AG04450 (cell line): ENCODE measurements at regions of chr11 and their contacts with region 1.

Region 1: DNA sequence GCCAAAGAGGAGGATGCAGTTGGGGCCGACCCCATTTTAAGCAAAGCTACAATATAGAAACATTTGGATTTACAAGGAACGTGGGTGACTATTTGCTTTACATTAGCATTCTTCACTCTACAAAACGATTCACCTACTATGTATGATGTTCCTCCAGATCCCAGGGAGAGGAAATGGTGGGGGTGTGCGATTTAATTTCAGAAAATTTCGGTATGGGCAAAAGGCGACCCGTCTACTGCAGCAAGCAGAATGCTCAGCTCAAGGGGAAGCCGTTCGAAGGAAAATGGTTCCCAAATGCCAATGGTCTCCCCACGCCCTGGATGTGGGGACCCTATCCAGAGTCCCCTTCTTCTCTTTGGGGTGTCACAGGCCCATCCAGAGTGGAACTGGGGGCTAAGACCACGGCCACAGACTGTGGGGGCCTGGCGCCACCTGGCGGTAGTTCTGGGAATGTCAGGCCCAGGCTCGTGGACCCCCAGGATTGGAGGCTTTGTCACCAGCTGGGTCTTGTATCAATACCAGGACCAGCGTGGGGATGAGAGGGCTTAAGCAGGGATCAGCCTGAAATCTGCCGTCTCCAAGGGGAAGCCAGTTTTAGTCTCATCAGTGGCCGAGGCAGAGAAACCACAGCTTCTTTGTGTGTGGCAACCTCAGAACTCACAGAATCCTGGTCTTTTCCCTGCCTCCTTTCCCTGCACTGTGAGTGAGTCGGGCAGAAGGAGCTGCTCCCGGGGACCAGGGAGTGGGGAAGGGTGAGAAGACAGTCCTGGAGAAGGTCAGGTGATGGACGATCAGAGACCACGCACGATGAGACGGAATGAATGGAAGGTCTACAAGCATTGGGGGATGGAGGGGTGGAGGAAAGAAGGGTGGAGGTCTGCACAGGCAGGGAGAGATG is 8.4 kb downstream of the LRRC10B start:
- DNase-seq: no peak
- H3K4me3 ChIP-seq: no peak overlapping the region
- H3K27ac ChIP-seq: no peak overlapping the region
- H3K27me3 ChIP-seq: peaks cover 15% of the 10 kb centered on the region
- CTCF ChIP-seq: peak; percentile 97

Region 2: DNA sequence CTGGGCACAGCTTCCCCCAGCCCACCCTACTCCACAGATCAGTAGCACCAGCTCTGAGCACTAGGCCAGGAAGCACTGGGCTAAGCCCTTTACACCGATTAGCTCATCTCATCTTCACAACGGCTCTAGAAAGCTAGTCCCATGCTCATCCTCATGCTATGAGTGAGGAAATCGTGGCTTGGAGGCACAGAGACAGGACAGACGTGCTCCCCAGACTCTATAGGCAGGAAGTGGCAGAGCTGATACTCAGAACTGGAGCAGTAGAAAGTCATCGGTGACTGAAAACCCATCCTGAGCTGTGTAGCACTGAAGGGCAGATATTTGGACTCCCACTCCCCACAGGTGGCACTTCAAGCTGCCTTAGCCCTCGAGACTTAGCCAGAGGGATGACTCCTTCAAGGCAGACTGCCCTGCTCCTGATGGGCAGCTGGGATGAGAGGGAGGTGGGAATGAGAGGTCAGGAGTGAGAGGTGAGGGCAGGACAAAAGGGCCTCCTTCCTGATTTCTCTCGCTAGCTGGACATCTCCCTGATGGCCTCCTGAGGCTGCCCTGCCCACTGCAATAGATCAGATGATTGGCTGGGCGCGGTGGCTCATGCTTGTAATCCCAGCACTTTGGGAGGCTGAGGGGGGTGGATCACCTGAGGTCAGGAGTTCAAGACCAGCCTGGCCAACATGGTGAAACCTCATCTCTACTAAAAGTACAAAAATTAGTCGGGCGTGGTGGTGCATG is 405.0 kb before region 1 on chr11:
- CTCF ChIA-PET with region 1: no interaction called
- POLR2A ChIA-PET with region 1: no interaction called
- DNase-seq: no peak
- H3K4me3 ChIP-seq: no peak overlapping the region
- H3K27ac ChIP-seq: no peak overlapping the region
- H3K27me3 ChIP-seq: peaks cover 19% of the 10 kb centered on the region
- CTCF ChIP-seq: no peak

Region 3: DNA sequence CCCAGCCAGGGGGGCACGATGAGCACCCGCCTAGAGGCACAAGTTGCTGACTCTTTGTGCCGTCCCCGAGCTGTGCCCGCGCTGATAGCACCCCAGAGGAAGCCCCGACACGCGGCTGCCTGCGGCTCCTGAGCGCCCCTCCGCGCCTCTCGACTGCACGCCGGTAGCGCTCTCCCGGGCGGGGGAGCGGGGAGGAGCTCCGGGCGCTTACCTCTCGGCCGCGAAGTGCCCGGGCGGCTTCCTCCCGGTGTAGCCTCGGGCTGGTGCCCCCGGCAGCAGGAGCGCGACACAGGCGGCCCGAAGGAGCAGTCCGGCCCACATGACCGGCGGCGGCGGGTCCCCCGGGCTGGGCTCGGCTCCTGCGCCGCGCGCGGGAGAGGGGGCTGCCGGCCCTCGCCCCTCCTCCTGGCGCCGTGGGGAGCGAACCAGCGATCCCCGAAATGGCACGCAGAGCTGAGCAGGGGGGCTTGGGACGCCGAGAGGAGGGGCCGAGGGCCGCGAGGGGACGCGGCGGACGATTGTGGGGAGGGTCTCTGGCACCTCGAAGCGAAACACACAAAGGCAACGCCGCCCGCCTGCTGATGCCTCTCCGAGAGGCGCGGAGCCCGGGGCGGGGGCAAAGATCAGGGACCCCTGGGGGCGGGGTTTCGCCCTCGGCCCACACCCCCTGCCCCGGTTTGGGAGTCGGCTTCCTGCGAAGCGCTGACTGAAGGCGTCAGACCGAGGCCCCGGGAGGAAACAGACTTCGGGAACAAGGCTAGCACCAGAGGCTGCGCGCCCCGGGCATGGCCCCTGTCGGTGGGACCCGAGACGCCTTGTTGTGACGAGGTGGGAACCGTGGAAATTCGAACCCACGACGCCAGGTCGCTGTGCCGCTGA is 222.0 kb before region 1 on chr11 and contains the start of gene VWCE:
- CTCF ChIA-PET with region 1: no interaction called
- POLR2A ChIA-PET with region 1: no interaction called
- DNase-seq: no peak
- H3K4me3 ChIP-seq: peak within 1 kb of the TSS; percentile 65
- H3K27ac ChIP-seq: no peak within 1 kb of the TSS
- H3K27me3 ChIP-seq: no peaks in the 10 kb centered on the region
- CTCF ChIP-seq: peak; percentile 42
- polyA plus RNA-seq, gene VWCE: 1.4 and 1.7 TPM in 2 replicates

Region 4: GRCh38 chr11:61446211-61446651 is 70.7 kb before region 1 on chr11:
- CTCF ChIA-PET with region 1: interaction called, 128 read pairs
- POLR2A ChIA-PET with region 1: interaction called, 3 read pairs
- DNase-seq: peak; percentile 95
- H3K4me3 ChIP-seq: no peak overlapping the region
- H3K27ac ChIP-seq: peak overlapping the region; percentile 71
- H3K27me3 ChIP-seq: no peaks in the 10 kb centered on the region
- CTCF ChIP-seq: peak; percentile 95

Region 5: DNA sequence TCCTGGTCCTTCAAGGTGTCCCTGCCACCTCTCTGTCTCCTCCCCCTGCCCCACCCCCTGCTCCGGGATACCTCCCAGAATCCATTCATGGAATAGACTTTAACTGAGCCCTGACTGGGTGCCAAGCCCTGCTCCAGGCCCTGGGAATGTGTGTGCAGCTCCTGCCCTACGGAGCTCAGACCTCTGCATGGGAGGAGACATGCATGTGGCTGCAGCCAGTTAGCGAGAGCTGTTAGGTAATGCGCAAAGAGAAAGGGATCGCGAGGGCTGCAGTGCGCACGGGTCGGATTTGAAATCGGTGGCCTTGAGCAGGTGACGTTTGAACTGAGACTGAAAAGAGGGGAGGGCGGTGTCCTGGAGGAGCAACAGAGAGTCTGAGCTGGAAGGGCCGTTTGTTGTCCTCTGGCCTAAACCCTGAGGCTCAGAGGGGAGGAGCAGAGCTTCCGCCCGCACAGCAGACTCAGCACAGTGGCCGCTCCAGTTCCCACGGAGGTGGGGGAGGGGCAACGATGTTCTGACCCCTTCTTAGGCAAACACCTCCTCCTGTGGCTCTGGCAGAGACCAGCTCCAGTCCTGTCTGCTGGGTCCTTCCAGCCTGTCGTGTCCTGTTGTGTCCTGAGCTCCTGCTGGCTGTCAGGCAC is 28.2 kb before region 1 on chr11:
- CTCF ChIA-PET with region 1: interaction called, 37 read pairs
- POLR2A ChIA-PET with region 1: no interaction called
- DNase-seq: no peak
- H3K4me3 ChIP-seq: no peak overlapping the region
- H3K27ac ChIP-seq: no peak overlapping the region
- H3K27me3 ChIP-seq: peaks cover 5% of the 10 kb centered on the region
- CTCF ChIP-seq: no peak

Region 6: GRCh38 chr11:61526956-61527731 is 10.2 kb after region 1 on chr11:
- CTCF ChIA-PET with region 1: interaction called, 23 read pairs
- POLR2A ChIA-PET with region 1: no interaction called
- DNase-seq: no peak
- H3K4me3 ChIP-seq: no peak overlapping the region
- H3K27ac ChIP-seq: no peak overlapping the region
- H3K27me3 ChIP-seq: peaks cover 87% of the 10 kb centered on the region
- CTCF ChIP-seq: no peak

Region 7: GRCh38 chr11:61555051-61555969 is 38.4 kb after region 1 on chr11:
- CTCF ChIA-PET with region 1: interaction called, 10 read pairs
- POLR2A ChIA-PET with region 1: no interaction called
- DNase-seq: no peak
- H3K4me3 ChIP-seq: no peak overlapping the region
- H3K27ac ChIP-seq: no peak overlapping the region
- H3K27me3 ChIP-seq: peaks cover 71% of the 10 kb centered on the region
- CTCF ChIP-seq: no peak